HEK293 (cell line): ENCODE measurements at regions of chr12 and their contacts with region 1.

Region 1: DNA sequence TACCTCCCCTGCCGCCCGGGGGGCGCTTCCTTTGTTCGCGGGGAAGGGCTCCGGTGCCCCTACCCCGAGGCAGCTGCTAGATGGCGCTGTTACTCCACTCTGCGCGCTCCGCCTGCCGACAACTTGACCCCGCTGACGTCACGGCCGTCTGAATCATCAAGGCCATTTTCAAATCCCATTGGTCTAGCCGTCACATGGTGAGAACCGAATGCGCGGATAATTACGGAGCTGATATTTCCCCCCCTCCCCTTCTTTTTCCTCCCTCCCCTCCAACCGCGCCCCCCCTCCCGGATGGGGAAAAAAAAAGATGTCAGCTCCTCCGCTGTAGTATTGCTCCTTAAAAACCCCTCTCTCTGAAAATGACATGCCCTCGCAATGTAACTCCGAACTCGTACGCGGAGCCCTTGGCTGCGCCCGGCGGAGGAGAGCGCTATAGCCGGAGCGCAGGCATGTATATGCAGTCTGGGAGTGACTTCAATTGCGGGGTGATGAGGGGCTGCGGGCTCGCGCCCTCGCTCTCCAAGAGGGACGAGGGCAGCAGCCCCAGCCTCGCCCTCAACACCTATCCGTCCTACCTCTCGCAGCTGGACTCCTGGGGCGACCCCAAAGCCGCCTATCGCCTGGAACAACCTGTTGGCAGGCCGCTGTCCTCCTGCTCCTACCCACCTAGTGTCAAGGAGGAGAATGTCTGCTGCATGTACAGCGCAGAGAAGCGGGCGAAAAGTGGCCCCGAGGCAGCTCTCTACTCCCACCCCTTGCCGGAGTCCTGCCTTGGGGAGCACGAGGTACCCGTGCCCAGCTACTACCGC is at the start of gene HOXC10:
- H3K4me3 ChIP-seq: peak within 1 kb of the TSS; percentile 32
- H3K27ac ChIP-seq: peak within 1 kb of the TSS; percentile 90
- H3K4me1 ChIP-seq: peaks cover 25% of the 10 kb centered on the region
- CTCF ChIP-seq: peak; percentile 81

Region 2: GRCh38 chr12:53770281-53770680 is 214.8 kb before region 1 on chr12:
- CTCF ChIA-PET with region 1: interaction called, 10 read pairs
- POLR2A ChIA-PET with region 1: no interaction called
- H3K4me3 ChIP-seq: no peak overlapping the region
- H3K27ac ChIP-seq: no peak overlapping the region
- H3K4me1 ChIP-seq: peaks cover 3% of the 10 kb centered on the region
- CTCF ChIP-seq: no peak